Endothelial cell of umbilical vein (primary cell): ENCODE measurements at regions of chr17 and their contacts with region 1.

Region 1: DNA sequence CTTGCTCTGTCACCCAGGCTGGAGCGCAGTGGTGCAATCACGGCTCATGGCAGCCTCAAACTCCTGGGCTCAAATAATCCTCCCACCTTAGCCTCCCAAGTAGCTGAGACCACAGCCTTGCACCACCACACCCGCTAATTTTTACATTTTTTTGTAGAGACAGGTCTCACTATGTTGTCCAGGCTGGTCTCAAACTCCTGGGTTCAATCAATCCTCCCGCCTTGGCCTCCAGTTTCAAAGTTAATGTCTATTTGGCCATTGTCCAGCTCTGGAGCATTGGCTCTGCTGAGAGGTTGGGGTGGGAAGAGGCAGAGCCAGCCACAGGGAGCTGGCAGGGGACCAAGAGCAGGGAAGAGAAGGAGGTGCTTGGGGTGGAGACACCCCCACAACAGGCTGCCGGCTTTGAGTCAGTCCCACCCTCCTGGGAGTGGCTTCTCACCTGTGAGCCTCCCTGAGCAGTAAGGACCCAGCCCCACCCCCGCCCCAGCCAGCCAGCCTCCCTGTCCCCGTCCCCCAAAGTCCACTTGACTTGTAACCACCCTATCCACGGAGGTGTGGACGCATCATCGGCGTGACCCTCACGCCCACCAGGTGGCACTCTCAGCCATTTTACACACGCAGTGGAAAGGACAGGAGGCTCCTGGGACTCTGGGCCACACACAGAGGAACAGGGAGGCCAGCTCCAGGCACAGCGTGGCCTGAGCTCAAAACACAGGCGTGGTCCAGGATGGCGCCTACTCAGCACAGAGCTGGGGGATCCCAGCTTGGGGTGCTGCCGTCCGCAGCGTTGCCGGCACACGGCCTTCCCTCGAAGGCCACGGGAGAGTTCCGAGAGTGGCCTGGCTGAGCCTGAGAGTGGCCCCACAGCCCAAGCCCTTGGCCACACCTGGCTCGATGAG is 22.8 kb upstream of the PVALEF start:
- DNase-seq: peak; percentile 80
- H3K4me3 ChIP-seq: no peak overlapping the region
- H3K27ac ChIP-seq: no peak overlapping the region
- H3K4me1 ChIP-seq: no peaks in the 10 kb centered on the region
- H3K27me3 ChIP-seq: no peaks in the 10 kb centered on the region
- CTCF ChIP-seq: peak; percentile 55 to 80
- POLR2A ChIP-seq: no peak

Region 2: DNA sequence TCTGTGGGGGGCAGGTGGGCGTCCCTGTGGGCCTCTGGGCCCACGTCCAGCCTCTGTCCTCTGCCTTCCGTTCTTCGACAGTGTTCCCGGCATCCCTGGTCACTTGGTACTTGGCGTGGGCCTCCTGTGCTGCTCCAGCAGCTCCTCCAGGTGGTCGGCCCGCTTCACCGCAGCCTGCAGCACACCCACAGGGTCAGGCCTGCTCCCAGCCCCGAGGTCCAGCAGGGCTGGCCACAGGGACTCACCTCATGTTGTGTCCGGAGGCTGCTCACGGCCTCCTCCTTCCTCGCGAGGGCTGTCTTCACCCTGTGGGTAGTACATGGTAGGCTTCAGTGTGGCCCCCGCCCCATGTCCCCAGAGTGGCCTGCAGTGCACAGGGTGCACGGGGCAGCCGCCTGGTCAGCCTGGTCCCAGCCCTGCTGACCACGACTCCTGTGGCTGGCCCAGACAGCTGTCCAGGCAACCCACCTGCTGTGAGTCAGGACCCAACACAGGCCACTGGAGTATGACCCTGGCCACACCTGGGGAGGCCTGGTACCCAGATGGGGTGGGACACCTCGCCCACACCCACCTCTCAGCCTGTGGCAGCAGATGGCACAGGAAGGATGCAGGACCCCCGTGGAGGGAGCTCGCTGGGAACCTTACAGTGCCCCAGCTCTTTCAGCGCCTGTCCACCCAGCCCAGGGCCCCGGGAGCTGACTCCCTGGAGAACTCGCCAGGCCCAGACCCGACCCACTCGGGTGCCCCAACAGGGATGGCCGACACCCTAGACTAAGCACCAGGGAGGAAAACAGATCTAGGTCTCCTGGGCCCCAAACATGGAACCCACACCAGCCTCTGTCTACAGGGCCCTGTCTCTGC is 47.4 kb after region 1 on chr17:
- CTCF ChIA-PET with region 1: interaction called, 40 read pairs
- POLR2A ChIA-PET with region 1: no interaction called
- dilution Hi-C with region 1: no loop called
- intact Hi-C with region 1: loop called (anchors 1 kb)
- DNase-seq: no peak
- H3K4me3 ChIP-seq: no peak overlapping the region
- H3K27ac ChIP-seq: no peak overlapping the region
- H3K4me1 ChIP-seq: no peaks in the 10 kb centered on the region
- H3K27me3 ChIP-seq: no peaks in the 10 kb centered on the region
- CTCF ChIP-seq: peak in 1 of 2 donors; percentile 32
- POLR2A ChIP-seq: no peak

Region 3: DNA sequence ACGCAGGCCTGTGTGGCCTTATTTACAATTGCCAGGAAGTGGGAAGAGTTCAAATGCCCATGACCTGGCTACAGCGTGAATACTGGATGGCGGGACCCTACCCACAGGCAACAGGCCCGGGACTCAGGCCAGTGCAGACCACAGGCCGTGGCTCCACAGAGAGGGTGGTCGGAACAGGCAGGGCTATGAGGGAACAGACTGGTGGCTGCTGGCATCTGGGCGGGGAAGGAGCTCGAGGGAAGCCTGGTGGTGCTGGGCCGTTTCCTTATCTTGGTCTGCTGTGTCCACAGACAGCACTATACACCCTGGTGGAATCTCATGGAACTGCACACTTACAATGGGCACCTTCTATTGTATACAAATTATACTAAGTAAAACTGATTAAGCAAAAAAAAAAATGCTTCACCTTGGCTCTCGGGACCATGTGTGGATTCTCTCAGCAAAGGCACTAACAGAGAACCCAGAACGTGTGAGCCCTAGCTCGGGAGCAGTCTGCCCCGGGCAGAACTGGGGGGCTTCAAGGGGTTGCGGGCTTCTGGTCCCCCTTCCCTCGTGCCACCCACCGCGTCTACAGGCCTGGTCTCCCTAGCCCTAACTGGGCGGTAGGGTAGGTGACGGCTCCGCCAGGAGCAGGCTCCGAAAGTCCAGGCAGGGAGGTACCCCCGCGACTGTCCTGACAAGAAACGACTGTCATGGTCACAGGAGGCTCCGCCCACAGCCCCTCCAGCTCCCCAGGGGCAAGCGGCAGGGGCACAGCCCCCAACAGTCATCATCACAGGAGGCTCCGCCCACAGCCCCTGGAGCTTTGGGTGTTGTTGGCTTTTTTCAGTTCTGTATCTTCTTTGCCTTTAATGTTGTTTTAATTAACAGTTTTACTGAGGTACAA is 58.4 kb after region 1 on chr17:
- CTCF ChIA-PET with region 1: interaction called, 91 read pairs
- POLR2A ChIA-PET with region 1: no interaction called
- dilution Hi-C with region 1: no loop called
- intact Hi-C with region 1: loop called (anchors 1 kb)
- DNase-seq: peak; percentile 76
- H3K4me3 ChIP-seq: no peak overlapping the region
- H3K27ac ChIP-seq: no peak overlapping the region
- H3K4me1 ChIP-seq: no peaks in the 10 kb centered on the region
- H3K27me3 ChIP-seq: no peaks in the 10 kb centered on the region
- CTCF ChIP-seq: peak; percentile 63 to 73
- POLR2A ChIP-seq: no peak

Region 4: DNA sequence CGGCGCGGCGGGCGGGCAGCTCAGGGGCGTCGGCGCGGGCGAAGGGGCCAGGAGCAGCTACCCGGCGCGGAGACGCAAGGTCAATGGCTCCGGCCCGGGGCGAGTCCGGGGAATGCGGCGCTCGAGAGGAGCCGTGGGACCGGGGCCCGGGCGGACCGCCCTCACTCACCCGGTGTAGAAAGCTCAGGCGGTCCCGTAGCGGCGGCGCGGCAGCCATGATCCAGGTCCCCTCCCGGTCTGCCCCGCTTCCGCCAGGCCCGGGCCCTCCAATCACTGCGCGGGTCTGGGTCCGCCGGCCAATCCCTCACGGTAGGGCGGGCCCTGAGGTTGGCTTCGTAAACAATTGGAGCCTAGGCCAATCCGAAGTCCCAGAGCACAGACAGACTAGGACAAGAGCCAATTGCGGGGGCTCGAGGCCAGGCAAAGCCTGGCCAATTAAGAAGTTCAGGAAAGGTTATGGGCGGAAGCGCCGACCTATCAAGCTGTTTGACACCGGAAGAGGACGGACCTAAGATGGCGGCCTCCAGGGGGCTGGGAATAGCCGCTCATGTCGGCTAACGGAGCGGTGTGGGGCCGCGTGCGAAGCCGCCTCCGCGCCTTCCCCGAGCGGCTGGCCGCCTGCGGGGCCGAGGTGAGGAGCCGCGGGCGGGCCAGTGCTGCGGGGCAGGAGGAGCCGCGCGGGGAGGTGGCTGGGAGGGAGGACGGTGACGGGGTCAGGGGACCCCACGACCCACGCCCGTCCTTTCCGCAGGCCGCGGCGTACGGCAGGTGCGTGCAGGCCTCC is 96.5 kb after region 1 on chr17 and contains the starts of genes NDUFAF8 and TEPSIN:
- CTCF ChIA-PET with region 1: interaction called, 33 read pairs
- POLR2A ChIA-PET with region 1: no interaction called
- dilution Hi-C with region 1: no loop called
- intact Hi-C with region 1: loop called (anchors 1 kb)
- DNase-seq: peak; percentile 100
- H3K4me3 ChIP-seq: peak within 1 kb of the TSS; percentile 78 to 86 (median 84)
- H3K27ac ChIP-seq: peak within 1 kb of the TSS; percentile 58
- H3K4me1 ChIP-seq: peaks cover 6% of the 10 kb centered on the region
- H3K27me3 ChIP-seq: no peaks in the 10 kb centered on the region
- CTCF ChIP-seq: no peak
- POLR2A ChIP-seq: peak; percentile 56
- total RNA-seq, gene NDUFAF8: 61.5 and 69.9 TPM in 2 replicates
- total RNA-seq, gene TEPSIN: 35.6 and 41.6 TPM in 2 replicates

Region 5: GRCh38 chr17:81277421-81277820 is 134.9 kb after region 1 on chr17:
- CTCF ChIA-PET with region 1: no interaction called
- POLR2A ChIA-PET with region 1: no interaction called
- dilution Hi-C with region 1: no loop called
- intact Hi-C with region 1: no loop called
- DNase-seq: no peak
- H3K4me3 ChIP-seq: no peak overlapping the region
- H3K27ac ChIP-seq: no peak overlapping the region
- H3K4me1 ChIP-seq: no peaks in the 10 kb centered on the region
- H3K27me3 ChIP-seq: no peaks in the 10 kb centered on the region
- CTCF ChIP-seq: no peak
- POLR2A ChIP-seq: no peak